Gastrocnemius medialis (tissue), 4 donors: ENCODE measurements at regions of chr14 and their contacts with region 1.

Region 1: GRCh38 chr14:99884834-99885648 is 91.8 kb downstream of the EML1 start:
- DNase-seq: no peak
- ATAC-seq: peak; percentile 81 to 91
- H3K4me3 ChIP-seq: no peak overlapping the region
- H3K27ac ChIP-seq: no peak overlapping the region
- H3K4me1 ChIP-seq: no peaks in the 10 kb centered on the region
- H3K27me3 ChIP-seq: no peaks in the 10 kb centered on the region
- CTCF ChIP-seq: peak; percentile 67 to 81 (median 80)
- POLR2A ChIP-seq: no peak

Region 2: DNA sequence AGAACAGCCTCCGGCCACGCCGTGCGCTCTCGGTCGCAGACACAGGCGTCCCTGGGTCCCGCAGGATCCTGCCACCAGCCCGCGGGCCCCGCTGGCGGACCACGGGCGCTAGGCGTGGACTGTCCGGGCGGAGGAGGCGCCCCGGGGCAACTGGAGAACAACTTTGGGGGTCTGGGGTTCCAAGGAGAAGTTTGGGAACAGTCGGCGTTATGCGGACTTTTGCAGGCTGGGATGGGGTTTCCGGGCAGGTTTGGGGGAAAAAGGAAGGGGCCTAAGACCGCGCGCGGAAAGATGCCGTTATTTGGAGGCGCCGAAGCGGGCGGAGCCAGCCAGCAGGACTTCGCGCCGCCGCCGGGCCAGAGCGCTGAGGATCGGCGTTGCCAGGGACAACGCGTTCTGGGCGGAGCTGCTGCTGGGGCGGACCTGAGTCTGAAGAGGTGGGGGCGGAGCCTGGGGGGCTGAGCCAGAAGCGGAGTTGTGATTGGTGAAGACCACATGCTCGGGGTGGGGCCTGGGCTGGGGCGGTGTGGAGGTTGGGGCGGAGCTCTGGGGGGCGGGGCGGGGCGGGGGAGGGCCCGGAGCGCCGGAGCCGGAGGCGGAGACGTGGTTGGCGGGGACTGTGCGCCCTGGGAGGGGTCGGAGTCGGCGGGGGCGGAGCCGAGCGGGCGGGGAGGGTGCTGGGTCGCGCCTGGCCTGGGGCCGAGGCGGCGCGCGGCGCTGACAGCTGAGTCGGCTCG is 201.3 kb before region 1 on chr14 and contains the start of gene CYP46A1:
- in situ Hi-C with region 1: loop called in 1 of 4 experiments (anchors 10 kb)
- intact Hi-C with region 1: loop called (anchors 1 kb)
- DNase-seq: peak; percentile 100
- ATAC-seq: peak; percentile 87 to 94
- H3K4me3 ChIP-seq: peak within 1 kb of the TSS; percentile 82 to 99 (median 90)
- H3K27ac ChIP-seq: peak within 1 kb of the TSS; percentile 75 to 90 (median 88)
- H3K4me1 ChIP-seq: peaks cover 7 to 11% of the 10 kb centered on the region in 2 donors
- H3K27me3 ChIP-seq: no peaks in the 10 kb centered on the region
- CTCF ChIP-seq: peak in 1 of 5 experiments; percentile 18
- POLR2A ChIP-seq: no peak
- total RNA-seq, gene CYP46A1: 0.18 to 2.2 (median 0.45) TPM

Region 3: GRCh38 chr14:99724196-99724891 is 160.7 kb before region 1 on chr14:
- in situ Hi-C with region 1: loop called in 2 of 4 experiments (anchors 5 to 10 kb)
- intact Hi-C with region 1: no loop called
- DNase-seq: no peak
- ATAC-seq: no peak
- H3K4me3 ChIP-seq: no peak overlapping the region
- H3K27ac ChIP-seq: no peak overlapping the region
- H3K4me1 ChIP-seq: no peaks in the 10 kb centered on the region
- H3K27me3 ChIP-seq: no peaks in the 10 kb centered on the region
- CTCF ChIP-seq: no peak
- POLR2A ChIP-seq: no peak

Region 4: DNA sequence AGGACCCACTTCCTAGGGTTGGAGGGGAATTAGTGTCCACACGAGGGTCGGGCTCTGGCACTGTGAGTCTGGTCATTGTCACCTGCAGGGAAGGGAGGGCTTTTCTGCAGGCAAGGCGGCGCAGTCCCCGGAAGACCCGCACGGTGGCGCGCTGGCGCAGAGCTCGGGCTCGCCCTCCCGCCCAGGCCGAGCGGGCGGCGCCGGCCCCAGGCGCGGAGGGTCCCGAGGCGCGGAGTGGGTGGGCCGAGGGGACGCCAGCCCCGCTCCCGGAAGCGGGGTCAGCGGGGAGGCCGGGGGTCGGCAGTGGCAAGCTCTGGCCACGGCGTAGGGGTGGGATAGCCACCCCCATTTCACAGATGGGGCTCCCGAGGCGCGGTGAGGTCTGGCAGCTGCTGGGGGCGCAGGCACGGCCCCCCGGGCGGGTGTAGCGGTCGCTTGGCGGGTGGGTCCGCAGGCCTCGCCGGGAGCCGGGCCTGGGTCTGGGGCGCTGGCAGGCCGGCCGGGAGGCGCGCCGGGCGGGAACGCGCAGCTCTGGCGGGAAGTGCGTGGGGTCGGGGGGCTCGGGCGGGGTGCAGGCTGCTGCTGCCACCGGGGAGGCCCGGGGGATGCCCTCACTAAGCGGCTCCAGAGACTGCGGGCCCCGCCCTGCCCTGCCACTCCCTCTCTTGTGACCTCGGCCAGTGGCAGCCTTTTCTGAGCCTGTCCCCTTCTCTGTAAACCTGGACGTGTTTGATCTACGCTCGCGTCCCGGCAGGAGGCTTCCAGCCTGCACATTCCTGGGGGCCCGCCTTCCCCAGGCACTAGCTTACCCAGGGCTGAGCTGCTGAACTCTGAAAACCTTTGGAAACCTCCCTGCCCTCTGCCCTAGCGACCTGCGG is 154.8 kb before region 1 on chr14:
- in situ Hi-C with region 1: loop called in 2 of 4 experiments (anchors 5 to 10 kb)
- intact Hi-C with region 1: loop called (anchors 1 kb)
- DNase-seq: peak; percentile 2 to 46
- ATAC-seq: peak; percentile 57 to 80
- H3K4me3 ChIP-seq: peak overlapping the region; percentile 33 to 63 (median 42)
- H3K27ac ChIP-seq: no peak overlapping the region
- H3K4me1 ChIP-seq: peaks cover 9 to 22% of the 10 kb centered on the region in 2 donors
- H3K27me3 ChIP-seq: no peaks in the 10 kb centered on the region
- CTCF ChIP-seq: peak; percentile 84 to 96 (median 90)
- POLR2A ChIP-seq: no peak

Region 5: DNA sequence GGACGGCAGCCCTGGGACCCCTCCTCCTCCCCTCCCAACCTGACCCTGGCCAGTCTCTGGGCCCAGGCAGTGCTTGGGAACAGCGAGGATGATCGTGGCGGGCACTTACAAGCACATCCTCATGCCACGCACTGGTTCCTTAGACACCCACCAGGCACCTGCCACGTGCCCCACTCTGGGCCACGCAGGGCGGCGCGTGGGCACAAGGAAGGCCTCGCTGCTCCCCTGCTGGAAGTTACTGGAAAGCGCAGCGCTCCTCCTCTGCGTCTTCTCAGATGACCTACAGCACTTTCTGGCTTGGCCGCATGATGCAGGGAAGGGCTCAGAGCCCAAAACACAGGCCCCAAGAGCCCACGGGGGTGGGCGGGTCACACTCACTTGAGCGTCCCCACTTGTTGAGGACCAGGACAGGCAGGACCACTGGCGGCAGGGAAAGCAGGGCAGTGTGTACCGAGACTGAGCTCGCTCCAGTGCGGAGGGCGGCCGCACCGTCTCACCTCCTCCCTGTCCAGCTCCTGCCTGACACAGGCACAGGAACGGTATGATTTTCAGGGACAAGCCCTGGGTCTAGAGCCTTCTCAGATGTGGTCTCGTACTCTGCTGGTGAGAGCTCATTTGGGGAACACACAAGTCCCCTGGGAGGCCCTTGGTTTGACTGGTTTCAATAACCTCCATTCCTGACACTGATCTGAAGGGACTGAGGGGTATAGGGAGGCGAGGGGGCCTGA is 51.9 kb after region 1 on chr14:
- in situ Hi-C with region 1: no loop called
- intact Hi-C with region 1: no loop called
- DNase-seq: no peak
- ATAC-seq: no peak
- H3K4me3 ChIP-seq: no peak overlapping the region
- H3K27ac ChIP-seq: no peak overlapping the region
- H3K4me1 ChIP-seq: no peaks in the 10 kb centered on the region
- H3K27me3 ChIP-seq: no peaks in the 10 kb centered on the region
- CTCF ChIP-seq: no peak
- POLR2A ChIP-seq: no peak